ENCODE measurements at regions of chr4 and their contacts with region 1.

Region 1: DNA sequence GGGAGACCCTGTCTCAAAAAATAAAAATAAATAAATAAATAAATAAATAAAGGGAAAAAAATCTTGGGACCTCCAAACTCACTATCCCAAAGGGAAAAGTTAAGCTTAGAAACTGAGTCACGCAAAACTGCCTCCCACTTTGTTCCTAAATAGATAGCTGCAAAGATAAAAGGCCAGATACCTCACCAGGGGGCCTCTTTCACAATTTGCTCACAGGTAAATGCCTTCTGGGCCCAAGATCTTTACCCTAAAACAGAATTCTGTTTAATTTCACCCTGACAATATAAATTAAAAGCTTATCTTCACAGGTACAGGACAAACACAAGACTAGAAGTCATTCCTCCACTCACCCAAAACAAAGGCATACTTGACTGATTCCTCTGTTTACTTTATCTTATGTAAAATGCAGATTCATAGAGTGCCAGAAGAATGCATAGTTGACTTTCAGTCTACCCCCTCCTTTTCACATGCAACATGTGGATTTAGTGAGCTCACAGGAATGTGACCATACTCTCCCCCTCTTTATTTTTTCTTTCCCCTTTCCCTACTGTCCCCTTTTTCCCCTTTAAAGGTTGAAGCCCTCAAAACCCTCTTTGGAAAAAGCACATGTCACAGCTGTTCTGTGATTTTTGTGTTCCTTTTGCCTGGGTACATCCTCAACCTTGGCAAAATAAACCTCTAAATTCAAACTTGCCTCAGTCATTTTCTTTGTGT is 23.4 kb downstream of the ELF2 start:
- DNase-seq: no peak
- H3K4me3 ChIP-seq: no peak overlapping the region
- H3K27ac ChIP-seq: no peak overlapping the region
- H3K4me1 ChIP-seq: no peaks in the 10 kb centered on the region
- H3K27me3 ChIP-seq: no peaks in the 10 kb centered on the region
- CTCF ChIP-seq: no peak

Region 2: GRCh38 chr4:139007640-139008039 is 145.9 kb before region 1 on chr4:
- CTCF ChIA-PET with region 1: no interaction called
- POLR2A ChIA-PET with region 1: no interaction called
- intact Hi-C with region 1: no loop called
- DNase-seq: no peak
- H3K4me3 ChIP-seq: no peak overlapping the region
- H3K27ac ChIP-seq: no peak overlapping the region
- H3K4me1 ChIP-seq: 0 out of 2 replicates have a peak, but pooled peaks cover under 1% of the 10 kb centered on the region
- H3K27me3 ChIP-seq: no peaks in the 10 kb centered on the region
- CTCF ChIP-seq: no peak

Region 3: DNA sequence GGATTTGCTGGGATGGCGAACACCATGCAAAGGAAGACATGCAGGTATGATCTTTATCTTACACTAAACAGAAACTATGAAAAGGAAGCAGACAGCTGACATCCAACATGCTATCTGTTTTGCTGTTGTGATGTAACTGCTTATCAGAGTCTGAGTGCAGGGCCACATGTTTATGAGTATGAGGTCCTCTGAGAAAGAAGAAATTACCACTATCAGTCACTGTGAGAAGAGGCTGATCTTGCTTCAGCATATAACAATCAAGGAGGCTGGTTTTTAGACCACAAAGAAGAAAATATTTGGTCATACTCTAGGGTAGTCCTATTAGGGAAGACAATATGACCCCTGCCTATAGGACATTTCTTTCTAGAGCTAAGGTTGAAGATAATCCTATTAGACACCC is 1255.4 kb after region 1 on chr4:
- CTCF ChIA-PET with region 1: no interaction called
- POLR2A ChIA-PET with region 1: interaction called, 16 read pairs
- intact Hi-C with region 1: no loop called
- DNase-seq: no peak
- H3K4me3 ChIP-seq: no peak overlapping the region
- H3K27ac ChIP-seq: no peak overlapping the region
- H3K4me1 ChIP-seq: no peaks in the 10 kb centered on the region
- H3K27me3 ChIP-seq: no peaks in the 10 kb centered on the region
- CTCF ChIP-seq: no peak

Measured in PC-9 (cell line).